ENCODE measurements at regions of chr17 and their contacts with region 1.

Region 1: GRCh38 chr17:4966844-4967538 is 626 bp downstream of the SPAG7 start:
- DNase-seq: peak; percentile 95
- H3K4me3 Mint-ChIP-seq: no peak overlapping the region
- H3K27ac Mint-ChIP-seq: no peak overlapping the region
- H3K4me1 Mint-ChIP-seq: peaks cover 40% of the 10 kb centered on the region
- H3K27me3 Mint-ChIP-seq: no peaks in the 10 kb centered on the region

Region 2: DNA sequence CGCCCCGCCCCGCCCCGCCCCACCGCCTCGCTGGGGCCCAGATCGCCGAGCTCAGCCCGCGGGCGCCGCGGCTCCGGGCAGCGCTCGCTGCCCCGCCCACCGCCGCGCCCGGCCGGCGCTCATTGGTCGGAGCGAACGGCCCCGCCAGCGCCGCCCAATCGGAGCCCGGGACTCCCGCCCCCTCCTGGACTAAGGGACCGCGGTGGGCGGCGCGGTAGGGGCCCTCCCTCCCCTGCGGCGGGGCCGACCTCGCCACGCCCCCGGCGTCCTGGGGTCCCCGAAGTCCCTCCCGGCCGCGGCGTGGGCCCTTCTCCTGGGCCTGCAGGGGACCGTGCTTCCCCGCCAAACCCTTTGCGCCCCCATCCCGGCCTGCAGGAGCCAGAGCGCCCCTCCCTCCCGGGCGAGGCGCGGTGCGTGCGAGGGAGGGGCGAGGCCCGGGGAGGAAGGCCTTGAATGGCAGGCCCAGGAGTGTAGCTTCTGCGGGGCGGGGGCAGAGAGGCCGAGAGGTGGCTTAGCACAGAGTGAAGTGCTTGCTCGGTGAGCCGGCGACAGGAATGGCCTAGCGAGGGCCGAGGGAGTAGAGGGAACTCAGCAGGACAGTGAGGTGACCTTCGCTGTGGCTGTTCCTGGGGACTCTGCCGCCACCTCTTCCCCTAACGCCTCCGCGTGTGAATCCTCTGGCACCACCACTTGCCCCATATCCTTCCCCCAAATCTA is 1073.8 kb before region 1 on chr17 and contains the start of gene CAMKK1:
- intact Hi-C with region 1: loop called (anchors 10 kb)
- DNase-seq: peak; percentile 90
- H3K4me3 Mint-ChIP-seq: peak within 1 kb of the TSS; percentile 82
- H3K27ac Mint-ChIP-seq: peak within 1 kb of the TSS; percentile 86
- H3K4me1 Mint-ChIP-seq: peaks cover 30% of the 10 kb centered on the region
- H3K27me3 Mint-ChIP-seq: no peaks in the 10 kb centered on the region
- total RNA-seq, gene CAMKK1: 6.1 and 7.8 TPM in 2 replicates

Region 3: GRCh38 chr17:4908301-4908700 is 58.7 kb before region 1 on chr17:
- intact Hi-C with region 1: loop called (anchors 2 kb)
- DNase-seq: no peak
- H3K4me3 Mint-ChIP-seq: no peak overlapping the region
- H3K27ac Mint-ChIP-seq: no peak overlapping the region
- H3K4me1 Mint-ChIP-seq: peaks cover 12% of the 10 kb centered on the region
- H3K27me3 Mint-ChIP-seq: peaks cover 12% of the 10 kb centered on the region

Region 4: GRCh38 chr17:4948931-4949320 is 18.1 kb before region 1 on chr17:
- intact Hi-C with region 1: loop called (anchors 1 kb)
- DNase-seq: peak; percentile 77
- H3K4me3 Mint-ChIP-seq: peak overlapping the region; percentile 97
- H3K27ac Mint-ChIP-seq: peak overlapping the region; percentile 100
- H3K4me1 Mint-ChIP-seq: peaks cover 49% of the 10 kb centered on the region
- H3K27me3 Mint-ChIP-seq: peaks cover 2% of the 10 kb centered on the region

Region 5: GRCh38 chr17:4986951-4987766 is 20.2 kb after region 1 on chr17 and contains the start of gene CAMTA2:
- intact Hi-C with region 1: loop called (anchors 1 kb)
- DNase-seq: peak; percentile 82
- H3K4me3 Mint-ChIP-seq: peak within 1 kb of the TSS; percentile 95
- H3K27ac Mint-ChIP-seq: peak within 1 kb of the TSS; percentile 89
- H3K4me1 Mint-ChIP-seq: peaks cover 39% of the 10 kb centered on the region
- H3K27me3 Mint-ChIP-seq: no peaks in the 10 kb centered on the region
- total RNA-seq, gene CAMTA2: 98.5 and 103 TPM in 2 replicates

Region 6: GRCh38 chr17:5031365-5032082 is 64.5 kb after region 1 on chr17:
- intact Hi-C with region 1: loop called (anchors 1 kb)
- DNase-seq: peak; percentile 73
- H3K4me3 Mint-ChIP-seq: peak overlapping the region; percentile 86
- H3K27ac Mint-ChIP-seq: peak overlapping the region; percentile 95
- H3K4me1 Mint-ChIP-seq: peaks cover 19% of the 10 kb centered on the region
- H3K27me3 Mint-ChIP-seq: peaks cover 7% of the 10 kb centered on the region

Region 7: DNA sequence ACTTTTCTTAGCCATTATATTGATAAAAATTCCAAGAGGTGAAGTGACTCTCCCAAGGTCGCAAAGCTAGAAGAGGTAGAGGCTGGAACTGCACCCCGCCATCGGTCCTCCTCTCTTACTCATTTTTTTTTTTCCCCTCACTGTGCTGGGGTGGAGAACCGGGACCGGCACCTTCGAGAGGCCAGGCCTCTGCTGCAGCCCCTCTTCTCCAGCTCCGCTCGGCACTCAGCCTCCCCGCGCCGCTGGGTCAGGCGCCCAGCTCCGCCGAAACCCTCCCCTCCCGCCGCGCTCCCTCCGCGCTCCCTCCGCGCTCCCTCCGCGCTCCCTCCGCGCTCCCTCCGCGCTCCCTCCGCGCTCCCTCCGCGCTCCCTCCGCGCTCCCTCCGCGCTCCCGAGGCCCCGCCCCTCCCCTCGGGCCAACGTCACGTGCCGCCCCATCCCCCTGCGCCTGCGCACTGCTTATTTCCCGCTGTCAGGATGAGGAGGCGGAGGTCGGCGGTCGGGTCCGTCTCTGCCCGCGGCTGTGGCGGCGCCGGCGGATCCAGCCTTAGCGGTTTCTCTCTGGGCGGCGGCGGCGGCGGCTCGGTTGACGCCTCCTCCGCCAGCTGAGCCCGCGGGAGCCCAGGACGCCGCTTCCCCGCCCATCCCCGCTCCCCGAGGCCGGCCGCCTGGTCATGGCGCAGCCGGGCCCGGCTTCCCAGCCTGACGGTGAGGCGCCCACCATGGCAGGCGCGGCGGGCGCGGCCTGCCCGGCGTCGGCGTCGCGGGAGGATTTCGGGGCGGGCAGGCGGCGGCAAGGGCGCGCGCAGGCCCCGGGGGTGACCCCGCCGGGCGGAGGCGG is 315.0 kb after region 1 on chr17 and contains the start of gene RABEP1:
- intact Hi-C with region 1: loop called (anchors 5 kb)
- DNase-seq: peak; percentile 92
- H3K4me3 Mint-ChIP-seq: peak within 1 kb of the TSS; percentile 90
- H3K27ac Mint-ChIP-seq: peak within 1 kb of the TSS; percentile 91
- H3K4me1 Mint-ChIP-seq: peaks cover 28% of the 10 kb centered on the region
- H3K27me3 Mint-ChIP-seq: peaks cover 3% of the 10 kb centered on the region
- total RNA-seq, gene RABEP1: 50.2 and 51.4 TPM in 2 replicates

Measured in activated T-helper 1 cell treated with anti-CD3 and anti-CD28 coated beads, Interleukin-12 subunit alpha, Interleukin-12 subunit beta, Interleukin-2, Interleukin-4 antibody, amounts not matched to agents 30 ng/mL and 10 ng/mL and 1 ng/mL, durations not matched to agents 14 hours and 24 hours and 36 hours (primary cell).